PC-9 (cell line): ENCODE measurements at regions of chrX and their contacts with region 1.

Region 1: GRCh38 chrX:4932790-4933189 is 1219.3 kb upstream of the PRKX start:
- DNase-seq: peak in 1 of 2 experiments; percentile 87
- H3K4me3 ChIP-seq: 0 out of 2 replicates have a peak overlapping the region, but pooled peaks have one; percentile 29
- H3K27ac ChIP-seq: peak overlapping the region; percentile 63
- H3K4me1 ChIP-seq: peaks cover 11% of the 10 kb centered on the region
- H3K27me3 ChIP-seq: no peaks in the 10 kb centered on the region
- CTCF ChIP-seq: no peak

Region 2: DNA sequence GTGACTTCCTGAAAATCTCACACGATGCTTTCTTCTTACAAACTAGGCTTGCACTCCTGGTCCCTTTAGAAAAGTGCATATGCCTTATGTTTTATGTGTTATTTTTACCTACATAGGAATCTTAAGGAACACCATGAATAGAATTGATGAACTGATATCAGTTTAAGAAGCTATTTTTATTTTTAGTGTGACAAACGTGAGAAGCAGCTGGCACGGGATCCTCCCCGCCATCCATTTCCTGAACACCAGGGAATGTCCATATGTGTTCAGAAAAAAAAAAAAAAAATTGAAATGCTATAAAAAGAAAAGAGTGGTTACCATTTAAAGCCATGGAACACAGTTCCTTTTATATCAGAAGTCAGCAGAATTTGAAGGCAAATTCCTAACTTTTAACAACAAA is 123.2 kb before region 1 on chrX:
- CTCF ChIA-PET with region 1: no interaction called
- POLR2A ChIA-PET with region 1: no interaction called
- intact Hi-C with region 1: no loop called
- DNase-seq: no peak
- H3K4me3 ChIP-seq: no peak overlapping the region
- H3K27ac ChIP-seq: no peak overlapping the region
- H3K4me1 ChIP-seq: no peaks in the 10 kb centered on the region
- H3K27me3 ChIP-seq: no peaks in the 10 kb centered on the region
- CTCF ChIP-seq: no peak

Region 3: GRCh38 chrX:5051831-5052491 is 119.2 kb after region 1 on chrX:
- CTCF ChIA-PET with region 1: no interaction called
- POLR2A ChIA-PET with region 1: interaction called, 12 read pairs
- intact Hi-C with region 1: no loop called
- DNase-seq: peak; percentile 76 to 93
- H3K4me3 ChIP-seq: peak overlapping the region; percentile 26; the same call in 1 of the 2 replicates
- H3K27ac ChIP-seq: peak overlapping the region; percentile 96
- H3K4me1 ChIP-seq: peaks cover 27% of the 10 kb centered on the region
- H3K27me3 ChIP-seq: no peaks in the 10 kb centered on the region
- CTCF ChIP-seq: no peak

Region 4: GRCh38 chrX:5771441-5771840 is 838.7 kb after region 1 on chrX:
- CTCF ChIA-PET with region 1: no interaction called
- POLR2A ChIA-PET with region 1: no interaction called
- intact Hi-C with region 1: no loop called
- DNase-seq: no peak
- H3K4me3 ChIP-seq: no peak overlapping the region
- H3K27ac ChIP-seq: no peak overlapping the region
- H3K4me1 ChIP-seq: no peaks in the 10 kb centered on the region
- H3K27me3 ChIP-seq: no peaks in the 10 kb centered on the region
- CTCF ChIP-seq: no peak